Caco-2 (cell line): ENCODE measurements at regions of chr3 and their contacts with region 1.

Region 1: DNA sequence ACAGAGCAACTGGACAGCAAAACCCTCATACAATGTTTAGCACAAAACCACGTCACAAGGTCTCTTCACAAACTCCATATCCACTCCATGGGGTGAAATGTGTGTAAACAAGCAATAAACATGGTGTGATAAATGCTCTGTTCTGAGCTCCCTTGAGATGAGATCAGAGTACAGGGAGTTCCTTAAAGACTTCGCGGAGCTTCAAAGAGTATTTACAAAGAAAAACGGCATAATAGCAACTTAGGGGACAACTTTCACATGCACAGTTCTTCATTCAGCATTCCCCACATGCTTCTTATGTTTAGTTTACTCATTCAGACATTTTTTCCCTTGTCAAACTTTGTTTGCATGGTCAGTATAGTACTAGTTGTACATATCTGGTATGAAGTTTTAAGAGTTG is 52.5 kb upstream of the SUCLG2 start:
- DNase-seq: peak in 1 of 2 experiments; percentile 61
- H3K4me3 ChIP-seq: no peak overlapping the region
- H3K4me3 Mint-ChIP-seq: peak overlapping the region; percentile 68
- H3K27ac Mint-ChIP-seq: peak overlapping the region; percentile 75
- H3K4me1 ChIP-seq: peaks cover 33% of the 10 kb centered on the region
- H3K4me1 Mint-ChIP-seq: peaks cover 7% of the 10 kb centered on the region
- H3K27me3 ChIP-seq: no peaks in the 10 kb centered on the region
- H3K27me3 Mint-ChIP-seq: no peaks in the 10 kb centered on the region
- CTCF ChIP-seq: no peak

Region 2: GRCh38 chr3:67605377-67605776 is 101.6 kb before region 1 on chr3:
- CTCF ChIA-PET with region 1: no interaction called
- POLR2A ChIA-PET with region 1: no interaction called
- intact Hi-C with region 1: no loop called
- DNase-seq: peak in 1 of 2 experiments; percentile 18
- H3K4me3 ChIP-seq: no peak overlapping the region
- H3K4me3 Mint-ChIP-seq: peak overlapping the region; percentile 33
- H3K27ac Mint-ChIP-seq: peak overlapping the region; percentile 55
- H3K4me1 ChIP-seq: peaks cover 9% of the 10 kb centered on the region; the same call in 1 of the 2 replicates
- H3K4me1 Mint-ChIP-seq: peaks cover 20% of the 10 kb centered on the region
- H3K27me3 ChIP-seq: no peaks in the 10 kb centered on the region
- H3K27me3 Mint-ChIP-seq: no peaks in the 10 kb centered on the region
- CTCF ChIP-seq: peak in 1 of 2 experiments; percentile 20

Region 3: DNA sequence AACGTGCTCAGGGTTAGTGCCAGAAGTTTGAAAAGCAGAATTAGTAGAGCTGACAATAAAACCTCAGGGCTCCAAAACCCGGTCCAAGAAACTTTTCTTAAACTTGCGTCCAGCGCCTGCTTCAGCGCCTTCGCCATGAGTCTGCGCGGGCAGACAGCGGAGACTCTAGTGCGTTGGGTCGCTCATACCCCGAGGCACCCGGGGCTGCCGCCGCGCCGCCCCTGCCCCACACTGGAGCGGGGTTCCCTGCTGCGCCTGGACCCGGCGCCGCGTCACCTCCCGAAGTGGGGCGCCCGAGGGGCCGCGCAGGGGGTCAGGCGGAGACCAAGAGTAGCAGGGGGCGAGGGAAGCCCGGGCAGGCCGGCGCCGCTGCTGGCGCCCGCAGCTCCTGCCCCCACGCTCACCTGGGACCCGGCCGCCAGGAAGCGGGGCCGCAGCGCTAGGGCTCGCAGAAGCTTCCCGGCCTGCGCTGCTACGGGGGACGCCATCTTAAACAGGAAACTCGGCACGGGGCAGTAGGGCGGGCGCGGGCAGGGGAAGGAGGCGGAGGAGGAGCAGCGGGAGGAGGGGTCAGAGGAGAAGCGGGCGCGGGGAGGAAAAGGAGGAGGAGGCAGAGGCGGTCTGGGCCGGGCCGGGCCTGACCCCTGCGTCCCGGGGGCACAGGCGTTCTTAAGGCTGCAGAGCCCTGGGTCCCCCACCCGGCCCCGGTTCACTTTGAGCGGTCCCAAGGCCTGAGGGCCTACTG is 52.7 kb before region 1 on chr3 and contains the start of gene SUCLG2:
- CTCF ChIA-PET with region 1: no interaction called
- POLR2A ChIA-PET with region 1: interaction called, 3 read pairs
- intact Hi-C with region 1: loop called (anchors 2 kb)
- DNase-seq: peak; percentile 91 to 92
- H3K4me3 ChIP-seq: peak within 1 kb of the TSS; percentile 72
- H3K4me3 Mint-ChIP-seq: peak within 1 kb of the TSS; percentile 75
- H3K27ac Mint-ChIP-seq: peak within 1 kb of the TSS; percentile 70
- H3K4me1 ChIP-seq: peaks cover 27% of the 10 kb centered on the region
- H3K4me1 Mint-ChIP-seq: peaks cover 19% of the 10 kb centered on the region
- H3K27me3 ChIP-seq: no peaks in the 10 kb centered on the region
- H3K27me3 Mint-ChIP-seq: no peaks in the 10 kb centered on the region
- CTCF ChIP-seq: no peak
- total RNA-seq, gene SUCLG2: 50.3 and 53.5 TPM in 2 replicates

Region 4: DNA sequence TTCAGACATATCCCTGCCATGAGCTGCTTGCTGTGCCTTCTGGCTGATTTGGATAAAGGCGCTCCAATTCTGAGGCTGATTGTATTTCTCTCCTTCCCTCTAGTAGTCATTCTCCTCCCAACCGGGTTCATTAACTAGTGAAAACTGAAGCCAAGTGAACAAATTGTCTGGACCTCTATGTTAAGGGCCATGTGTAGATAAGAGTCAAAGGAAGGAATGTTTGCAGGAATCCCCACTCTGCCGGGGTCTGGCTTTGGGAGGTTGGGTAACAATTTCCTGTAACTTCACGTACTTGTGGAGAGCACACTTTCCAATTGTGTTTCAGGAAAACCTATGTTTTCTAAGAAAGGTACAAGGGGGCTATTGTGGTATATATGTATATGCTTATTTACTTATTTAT is 14.3 kb before region 1 on chr3:
- CTCF ChIA-PET with region 1: no interaction called
- POLR2A ChIA-PET with region 1: no interaction called
- intact Hi-C with region 1: loop called (anchors 2 kb)
- DNase-seq: peak in 1 of 2 experiments; percentile 15
- H3K4me3 ChIP-seq: no peak overlapping the region
- H3K4me3 Mint-ChIP-seq: no peak overlapping the region
- H3K27ac Mint-ChIP-seq: peak overlapping the region; percentile 60
- H3K4me1 ChIP-seq: peaks cover 4% of the 10 kb centered on the region
- H3K4me1 Mint-ChIP-seq: peaks cover 13% of the 10 kb centered on the region
- H3K27me3 ChIP-seq: no peaks in the 10 kb centered on the region
- H3K27me3 Mint-ChIP-seq: no peaks in the 10 kb centered on the region
- CTCF ChIP-seq: no peak

Region 5: DNA sequence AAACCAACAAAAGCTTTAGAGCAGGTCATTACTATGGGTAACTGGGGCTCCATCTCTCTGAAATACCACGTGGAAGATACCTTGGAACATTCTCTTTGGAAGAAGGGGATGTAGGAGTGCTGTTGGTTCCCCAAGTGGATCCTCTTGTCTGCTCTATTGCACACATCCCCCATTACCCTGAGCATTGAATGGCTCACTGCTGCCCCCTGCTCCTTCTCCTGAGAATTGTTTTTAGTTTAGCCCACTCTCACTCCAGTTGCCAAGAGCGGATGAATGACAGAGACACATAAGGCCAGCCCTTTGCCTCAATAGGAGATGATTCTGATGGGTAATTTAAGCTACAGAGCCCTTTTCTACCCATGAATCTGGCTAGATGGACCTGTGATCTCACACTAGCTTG is 83.1 kb after region 1 on chr3:
- CTCF ChIA-PET with region 1: no interaction called
- POLR2A ChIA-PET with region 1: no interaction called
- intact Hi-C with region 1: no loop called
- DNase-seq: peak; percentile 41 to 66
- H3K4me3 ChIP-seq: no peak overlapping the region
- H3K4me3 Mint-ChIP-seq: no peak overlapping the region
- H3K27ac Mint-ChIP-seq: no peak overlapping the region
- H3K4me1 ChIP-seq: no peaks in the 10 kb centered on the region
- H3K4me1 Mint-ChIP-seq: peaks cover 9% of the 10 kb centered on the region
- H3K27me3 ChIP-seq: no peaks in the 10 kb centered on the region
- H3K27me3 Mint-ChIP-seq: peaks cover 4% of the 10 kb centered on the region
- CTCF ChIP-seq: peak; percentile 62 to 65